ENCODE measurements at regions of chr3 and their contacts with region 1.

Region 1: GRCh38 chr3:70120357-70121121 is 121.0 kb downstream of the SAMMSON start:
- DNase-seq: peak; percentile 84
- ATAC-seq: peak; percentile 58
- H3K4me3 Mint-ChIP-seq: no peak overlapping the region
- H3K27ac Mint-ChIP-seq: no peak overlapping the region
- H3K4me1 Mint-ChIP-seq: no peaks in the 10 kb centered on the region
- H3K27me3 Mint-ChIP-seq: peaks cover 20% of the 10 kb centered on the region

Region 2: GRCh38 chr3:70064194-70064779 is 56.3 kb before region 1 on chr3:
- CTCF ChIA-PET with region 1: interaction called, 3 read pairs
- POLR2A ChIA-PET with region 1: no interaction called
- intact Hi-C with region 1: loop called in 1 of 2 experiments (anchors 5 kb)
- DNase-seq: peak; percentile 15
- ATAC-seq: peak; percentile 33
- H3K4me3 Mint-ChIP-seq: no peak overlapping the region
- H3K27ac Mint-ChIP-seq: no peak overlapping the region
- H3K4me1 Mint-ChIP-seq: no peaks in the 10 kb centered on the region
- H3K27me3 Mint-ChIP-seq: peaks cover 6% of the 10 kb centered on the region

Region 3: GRCh38 chr3:70078778-70079177 is 41.8 kb before region 1 on chr3:
- CTCF ChIA-PET with region 1: no interaction called
- POLR2A ChIA-PET with region 1: no interaction called
- intact Hi-C with region 1: no loop called
- DNase-seq: no peak
- ATAC-seq: no peak
- H3K4me3 Mint-ChIP-seq: no peak overlapping the region
- H3K27ac Mint-ChIP-seq: no peak overlapping the region
- H3K4me1 Mint-ChIP-seq: no peaks in the 10 kb centered on the region
- H3K27me3 Mint-ChIP-seq: peaks cover 23% of the 10 kb centered on the region

Region 4: DNA sequence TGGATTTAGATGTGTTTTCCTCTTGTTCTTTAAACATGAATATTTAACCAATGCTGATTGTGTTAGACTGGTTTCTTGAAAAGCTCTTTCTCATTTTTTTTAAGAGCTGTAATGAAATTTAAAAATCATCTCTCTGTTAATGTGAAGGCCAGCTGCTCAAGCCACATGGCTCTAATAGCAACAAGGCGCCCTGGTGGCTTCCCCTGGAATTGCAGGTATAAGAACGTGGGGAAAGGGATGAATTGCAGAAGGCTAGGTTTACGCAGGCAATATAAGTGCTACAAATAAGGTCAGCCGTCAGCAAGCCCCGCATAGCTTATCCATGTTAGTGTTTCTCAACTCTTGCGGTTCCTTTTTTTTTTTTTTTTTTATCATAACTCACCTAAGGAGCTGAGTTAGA is 12.5 kb before region 1 on chr3:
- CTCF ChIA-PET with region 1: interaction called, 27 read pairs
- POLR2A ChIA-PET with region 1: no interaction called
- intact Hi-C with region 1: no loop called
- DNase-seq: peak; percentile 47
- ATAC-seq: no peak
- H3K4me3 Mint-ChIP-seq: no peak overlapping the region
- H3K27ac Mint-ChIP-seq: no peak overlapping the region
- H3K4me1 Mint-ChIP-seq: no peaks in the 10 kb centered on the region
- H3K27me3 Mint-ChIP-seq: peaks cover 18% of the 10 kb centered on the region